Activated CD8-positive, alpha-beta memory T cell treated with anti-CD3 and anti-CD28 coated beads, Interleukin-2, amount 10 ng/mL, durations not matched to agents 7 days and 5 days (primary cell): ENCODE measurements at regions of chr4 and their contacts with region 1.

Region 1: DNA sequence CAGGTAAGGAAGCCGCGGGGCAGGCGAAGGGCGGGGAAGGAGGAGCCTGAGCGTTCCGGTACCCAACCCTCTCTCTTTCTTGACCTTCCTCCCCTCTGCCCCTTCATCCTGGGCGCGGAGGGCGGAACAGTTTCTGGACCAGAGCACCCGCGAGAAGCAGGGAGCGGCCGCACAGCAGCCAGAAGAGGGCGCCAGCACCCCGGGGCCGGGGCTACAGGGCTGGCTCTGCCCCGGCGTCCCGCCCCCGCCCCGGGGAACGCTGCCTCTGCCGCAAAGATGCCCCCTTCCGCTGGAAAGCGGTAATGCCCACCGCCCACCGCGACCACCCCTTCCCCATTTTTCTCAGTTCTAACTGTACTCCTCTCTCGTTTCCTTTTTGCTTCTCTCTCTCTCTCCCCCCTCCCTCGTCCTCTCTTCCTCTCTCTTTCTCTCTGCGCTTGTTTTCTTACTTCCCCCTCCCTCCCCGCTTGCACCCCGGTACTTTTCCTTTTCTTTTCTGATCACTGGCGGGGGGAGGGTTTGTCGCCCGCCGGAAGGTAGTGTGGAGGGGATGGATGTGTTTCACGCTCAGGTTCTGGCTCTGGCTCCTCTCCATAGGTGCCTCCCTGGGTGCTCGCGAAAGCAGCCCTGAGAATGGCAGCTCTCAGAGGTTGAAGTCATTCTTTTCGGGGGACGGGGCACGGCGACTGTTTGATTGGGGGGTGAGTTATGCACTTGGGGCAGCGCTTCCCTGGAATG is 13.1 kb upstream of the PRDM8 start:
- DNase-seq: peak; percentile 96
- ATAC-seq: peak; percentile 92
- H3K4me3 Mint-ChIP-seq: peak overlapping the region; percentile 96
- H3K27ac Mint-ChIP-seq: peak overlapping the region; percentile 87
- H3K4me1 Mint-ChIP-seq: peaks cover 60% of the 10 kb centered on the region
- H3K27me3 Mint-ChIP-seq: peaks cover 12% of the 10 kb centered on the region

Region 2: DNA sequence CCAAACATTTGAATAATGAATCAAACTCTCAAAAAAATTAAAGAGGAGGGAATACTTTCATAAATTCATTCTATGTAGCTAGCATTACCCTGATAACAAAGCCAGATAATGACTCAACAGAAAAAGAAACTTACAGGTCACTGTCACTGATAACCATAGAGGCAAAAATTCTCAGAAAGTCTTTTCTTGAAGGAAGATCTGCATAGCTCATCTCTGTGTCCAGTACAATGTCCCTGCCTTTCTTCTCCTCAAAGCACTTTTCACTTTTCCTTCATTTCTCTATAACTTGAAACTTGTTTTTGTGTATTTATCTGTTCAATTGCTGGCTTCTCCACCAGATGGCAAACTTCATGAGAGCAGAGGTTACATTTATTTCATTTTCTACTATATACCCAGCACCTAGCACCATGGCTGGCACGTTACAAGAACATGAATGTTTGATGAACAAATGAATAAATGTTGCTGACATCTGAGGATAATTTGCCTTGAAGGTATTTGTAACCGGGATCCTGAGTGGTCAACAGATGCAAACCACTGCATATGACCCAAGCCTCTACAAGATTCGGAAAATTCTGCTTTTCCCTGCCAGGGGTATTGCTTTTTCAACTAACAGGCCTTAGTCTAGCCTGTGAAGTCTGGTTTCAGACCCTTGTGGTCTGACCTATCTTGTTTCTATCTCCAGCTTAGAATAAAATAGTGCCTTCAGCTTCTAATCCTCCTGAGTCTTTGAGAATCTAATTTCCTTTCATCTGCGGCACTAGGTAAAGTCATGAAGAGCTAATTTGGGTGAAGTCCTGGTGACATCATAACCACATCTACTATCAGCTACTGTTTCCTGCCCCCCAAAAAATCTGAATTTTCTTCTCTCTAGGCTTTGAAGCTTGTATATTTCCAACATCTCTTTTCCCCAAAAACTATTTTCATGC is 58.7 kb before region 1 on chr4:
- CTCF ChIA-PET with region 1: interaction called, 135 read pairs
- DNase-seq: peak; percentile 67
- ATAC-seq: peak; percentile 83
- H3K4me3 Mint-ChIP-seq: peak overlapping the region; percentile 33
- H3K27ac Mint-ChIP-seq: peak overlapping the region; percentile 95
- H3K4me1 Mint-ChIP-seq: peaks cover 66% of the 10 kb centered on the region
- H3K27me3 Mint-ChIP-seq: no peaks in the 10 kb centered on the region

Region 3: GRCh38 chr4:80173401-80173800 is 10.8 kb before region 1 on chr4:
- CTCF ChIA-PET with region 1: interaction called, 79 read pairs
- DNase-seq: peak; percentile 83
- ATAC-seq: peak; percentile 90
- H3K4me3 Mint-ChIP-seq: peak overlapping the region; percentile 26
- H3K27ac Mint-ChIP-seq: peak overlapping the region; percentile 94
- H3K4me1 Mint-ChIP-seq: peaks cover 56% of the 10 kb centered on the region
- H3K27me3 Mint-ChIP-seq: no peaks in the 10 kb centered on the region

Region 4: DNA sequence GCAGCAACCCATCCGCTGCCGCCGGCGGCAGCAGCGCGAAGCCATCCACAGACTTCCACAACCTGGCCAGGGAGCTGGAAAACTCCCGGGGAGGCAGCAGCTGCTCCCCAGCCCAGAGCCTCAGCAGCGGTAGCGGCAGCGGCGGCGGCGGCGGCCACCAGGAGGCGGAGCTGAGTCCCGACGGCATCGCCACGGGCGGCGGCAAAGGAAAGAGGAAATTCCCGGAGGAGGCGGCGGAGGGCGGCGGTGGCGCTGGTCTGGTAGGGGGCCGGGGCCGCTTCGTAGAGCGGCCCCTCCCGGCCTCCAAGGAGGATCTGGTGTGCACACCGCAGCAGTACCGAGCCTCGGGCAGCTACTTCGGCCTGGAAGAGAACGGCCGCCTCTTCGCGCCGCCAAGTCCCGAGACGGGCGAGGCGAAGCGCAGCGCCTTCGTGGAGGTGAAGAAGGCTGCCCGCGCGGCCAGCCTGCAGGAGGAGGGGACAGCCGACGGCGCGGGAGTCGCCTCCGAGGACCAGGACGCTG is 18.0 kb after region 1 on chr4:
- CTCF ChIA-PET with region 1: interaction called, 125 read pairs
- DNase-seq: peak; percentile 83
- ATAC-seq: peak; percentile 75
- H3K4me3 Mint-ChIP-seq: peak overlapping the region; percentile 72
- H3K27ac Mint-ChIP-seq: peak overlapping the region; percentile 75
- H3K4me1 Mint-ChIP-seq: peaks cover 23% of the 10 kb centered on the region
- H3K27me3 Mint-ChIP-seq: peaks cover 13% of the 10 kb centered on the region

Region 5: DNA sequence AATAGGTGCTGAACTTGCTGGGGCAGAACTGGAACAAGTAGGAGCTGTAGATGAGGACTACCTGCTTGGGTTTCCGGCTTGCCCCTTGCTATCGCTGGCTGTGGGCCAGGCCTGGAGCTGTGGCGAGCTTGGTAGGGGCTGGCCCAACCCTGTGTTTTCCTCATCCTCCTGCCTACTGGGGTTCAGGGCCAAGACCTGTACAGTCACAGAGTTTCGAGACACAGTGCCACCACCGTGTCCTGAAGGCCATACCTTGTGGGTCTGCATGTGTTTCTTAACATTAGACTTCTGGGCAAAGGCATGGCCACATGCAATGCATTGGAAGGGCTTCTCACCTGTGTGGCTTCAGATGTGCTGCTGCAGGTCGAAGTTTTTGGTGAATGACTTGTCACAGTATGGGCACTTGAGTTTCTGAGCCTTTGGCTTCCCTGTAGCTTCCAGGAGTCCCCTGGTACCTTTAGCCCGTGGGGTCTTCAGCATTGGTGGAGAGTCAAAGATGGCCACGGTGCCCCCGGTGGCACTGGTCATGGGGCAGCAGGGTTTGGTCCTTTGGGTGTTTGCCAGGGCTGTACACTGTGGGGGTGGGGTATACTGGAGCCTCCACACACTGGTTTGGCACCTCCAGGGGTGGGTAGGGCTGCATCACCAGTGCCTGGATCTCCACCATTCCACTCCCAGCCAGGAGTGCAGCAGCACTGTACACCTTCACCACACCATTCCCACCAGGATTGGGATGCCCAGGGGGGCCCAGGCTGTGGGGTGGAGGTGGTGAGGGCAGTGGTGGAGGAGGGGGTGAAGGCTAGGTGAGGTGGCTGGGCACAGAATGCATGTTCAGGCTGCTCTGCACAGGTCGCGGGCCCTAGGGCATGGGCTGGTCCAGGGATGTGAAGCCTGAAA is 203.4 kb after region 1 on chr4:
- CTCF ChIA-PET with region 1: no interaction called
- DNase-seq: no peak
- ATAC-seq: no peak
- H3K4me3 Mint-ChIP-seq: no peak overlapping the region
- H3K27ac Mint-ChIP-seq: no peak overlapping the region
- H3K4me1 Mint-ChIP-seq: no peaks in the 10 kb centered on the region
- H3K27me3 Mint-ChIP-seq: no peaks in the 10 kb centered on the region

Region 6: DNA sequence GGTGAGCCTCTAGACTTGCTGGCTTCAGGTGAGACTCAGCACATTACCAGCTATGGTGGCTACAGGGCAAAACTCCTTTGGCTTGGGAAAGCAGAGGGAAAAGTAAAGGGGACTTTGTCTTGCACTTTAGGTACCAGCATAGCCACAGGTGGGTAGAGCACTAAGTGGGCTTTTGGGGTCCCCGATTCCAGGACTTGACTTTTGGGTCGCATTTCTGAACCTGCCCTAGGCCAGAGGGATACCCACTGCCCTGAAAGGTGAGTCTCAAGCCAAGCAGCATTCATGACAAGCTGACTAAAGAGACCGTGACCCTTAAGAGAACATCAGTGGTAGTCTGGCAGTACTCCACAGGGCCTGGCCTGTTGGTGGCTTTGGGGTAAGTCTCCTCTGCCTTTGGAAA is 376.1 kb after region 1 on chr4:
- CTCF ChIA-PET with region 1: no interaction called
- DNase-seq: no peak
- ATAC-seq: no peak
- H3K4me3 Mint-ChIP-seq: no peak overlapping the region
- H3K27ac Mint-ChIP-seq: no peak overlapping the region
- H3K4me1 Mint-ChIP-seq: no peaks in the 10 kb centered on the region
- H3K27me3 Mint-ChIP-seq: no peaks in the 10 kb centered on the region